Spleen (tissue), 13 donors: ENCODE measurements at regions of chr19 and their contacts with region 1.

Region 1: GRCh38 chr19:4267101-4267900 is 11.8 kb upstream of the SHD start:
- DNase-seq: peak; percentile 85
- H3K4me3 ChIP-seq: no peak overlapping the region
- H3K27ac ChIP-seq: peak overlapping the region in 1 of 8 donors; percentile 6
- H3K4me1 ChIP-seq: peaks cover 0 to 49% (median 20%) of the 10 kb centered on the region in 6 donors
- H3K27me3 ChIP-seq: no peaks in the 10 kb centered on the region
- CTCF ChIP-seq: peak; percentile 63 to 86 (median 80)
- POLR2A ChIP-seq: no peak

Region 2: GRCh38 chr19:4352701-4353121 is 85.4 kb after region 1 on chr19:
- intact Hi-C with region 1: loop called (anchors 5 kb)
- DNase-seq: peak; percentile 79
- H3K4me3 ChIP-seq: no peak overlapping the region
- H3K27ac ChIP-seq: no peak overlapping the region
- H3K4me1 ChIP-seq: peaks cover 0 to 15% (median 1%) of the 10 kb centered on the region in 6 donors
- H3K27me3 ChIP-seq: peaks cover 0 to 24% (median 0%) of the 10 kb centered on the region in 7 donors
- CTCF ChIP-seq: peak; percentile 64 to 95 (median 88)
- POLR2A ChIP-seq: no peak

Region 3: GRCh38 chr19:4524808-4525562 is 257.7 kb after region 1 on chr19:
- intact Hi-C with region 1: loop called (anchors 10 kb)
- DNase-seq: peak; percentile 90
- H3K4me3 ChIP-seq: peak overlapping the region in 2 of 8 donors; percentile 23 to 45
- H3K27ac ChIP-seq: peak overlapping the region in 2 of 8 donors; percentile 19 to 27
- H3K4me1 ChIP-seq: peaks cover 0 to 18% (median 2%) of the 10 kb centered on the region in 6 donors
- H3K27me3 ChIP-seq: peaks cover 0 to 23% (median 0%) of the 10 kb centered on the region in 7 donors
- CTCF ChIP-seq: peak; percentile 42 to 90 (median 70)
- POLR2A ChIP-seq: no peak